ENCODE measurements at regions of chr17 and their contacts with region 1.

Region 1: DNA sequence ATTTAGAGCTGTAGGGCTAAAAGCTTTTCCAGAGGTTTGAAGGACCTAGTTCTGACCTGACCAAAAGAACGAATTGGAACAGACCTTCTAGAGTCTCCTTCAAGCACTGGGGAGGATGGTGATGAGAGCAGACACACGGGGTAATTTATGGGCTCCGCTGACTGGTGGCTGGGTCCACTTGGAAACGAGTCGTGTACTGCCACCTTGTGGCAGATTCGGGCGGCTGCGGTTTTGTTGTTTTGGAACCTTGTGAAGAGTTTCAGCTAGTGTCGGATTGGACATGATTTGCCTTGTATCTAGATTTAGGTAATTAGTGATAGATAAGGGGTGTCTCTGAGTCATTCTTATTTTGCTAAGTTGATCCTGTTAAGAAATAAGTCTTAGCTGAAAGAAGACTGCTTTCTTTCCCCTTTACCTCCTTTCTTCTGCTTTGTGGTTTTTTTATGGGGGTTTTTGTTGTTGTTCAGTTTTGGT is 98.9 kb downstream of the AATF start:
- DNase-seq: peak; percentile 57
- H3K4me3 ChIP-seq: no peak overlapping the region
- H3K27ac ChIP-seq: no peak overlapping the region
- H3K27me3 ChIP-seq: no peaks in the 10 kb centered on the region
- CTCF ChIP-seq: peak; percentile 90

Region 2: DNA sequence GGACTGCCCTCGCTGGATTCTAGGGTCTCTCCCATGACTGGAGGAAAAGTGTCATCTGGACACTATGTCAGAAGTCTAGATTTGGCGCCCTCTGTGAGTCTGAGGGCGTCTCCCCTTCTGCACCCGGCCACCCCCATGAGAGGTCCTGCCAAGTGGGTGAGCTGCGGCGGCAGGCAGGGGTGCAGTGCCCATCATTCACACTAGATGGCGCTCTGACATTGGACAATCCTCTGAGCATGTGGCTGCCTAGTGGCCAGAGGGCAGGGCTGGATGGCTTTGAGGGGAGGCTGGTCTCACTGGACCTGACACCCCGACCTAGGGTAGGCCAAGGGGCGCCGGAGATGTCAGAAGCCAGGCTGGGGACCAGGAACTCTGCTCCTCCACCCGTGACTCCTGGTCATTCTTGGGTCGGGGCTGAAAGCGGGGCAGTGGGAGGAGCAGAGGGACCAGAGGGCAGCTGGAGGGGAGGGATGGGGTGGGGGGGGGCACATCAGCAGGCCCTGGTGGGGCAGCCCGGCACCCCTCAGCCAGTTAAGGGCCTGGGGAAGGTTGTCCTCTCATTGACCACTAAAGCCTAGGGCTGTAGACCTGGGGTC is 418.3 kb before region 1 on chr17:
- CTCF ChIA-PET with region 1: interaction called, 103 read pairs
- POLR2A ChIA-PET with region 1: no interaction called
- DNase-seq: peak; percentile 33
- H3K4me3 ChIP-seq: no peak overlapping the region
- H3K27ac ChIP-seq: no peak overlapping the region
- H3K27me3 ChIP-seq: peaks cover 31% of the 10 kb centered on the region
- CTCF ChIP-seq: peak; percentile 98

Region 3: GRCh38 chr17:36972186-36972700 is 75.4 kb before region 1 on chr17:
- CTCF ChIA-PET with region 1: interaction called, 21 read pairs
- POLR2A ChIA-PET with region 1: no interaction called
- DNase-seq: no peak
- H3K4me3 ChIP-seq: no peak overlapping the region
- H3K27ac ChIP-seq: no peak overlapping the region
- H3K27me3 ChIP-seq: no peaks in the 10 kb centered on the region
- CTCF ChIP-seq: no peak

Region 4: GRCh38 chr17:37062021-37062420 is 14.4 kb after region 1 on chr17:
- CTCF ChIA-PET with region 1: interaction called, 31 read pairs
- POLR2A ChIA-PET with region 1: no interaction called
- DNase-seq: no peak
- H3K4me3 ChIP-seq: no peak overlapping the region
- H3K27ac ChIP-seq: no peak overlapping the region
- H3K27me3 ChIP-seq: peaks cover 22% of the 10 kb centered on the region
- CTCF ChIP-seq: no peak

Region 5: GRCh38 chr17:37239690-37240334 is 192.1 kb after region 1 on chr17:
- CTCF ChIA-PET with region 1: interaction called, 21 read pairs
- POLR2A ChIA-PET with region 1: no interaction called
- DNase-seq: no peak
- H3K4me3 ChIP-seq: no peak overlapping the region
- H3K27ac ChIP-seq: no peak overlapping the region
- H3K27me3 ChIP-seq: no peaks in the 10 kb centered on the region
- CTCF ChIP-seq: peak; percentile 80